Motor neuron (in vitro differentiated cells): ENCODE measurements at regions of chr10 and their contacts with region 1.

Region 1: DNA sequence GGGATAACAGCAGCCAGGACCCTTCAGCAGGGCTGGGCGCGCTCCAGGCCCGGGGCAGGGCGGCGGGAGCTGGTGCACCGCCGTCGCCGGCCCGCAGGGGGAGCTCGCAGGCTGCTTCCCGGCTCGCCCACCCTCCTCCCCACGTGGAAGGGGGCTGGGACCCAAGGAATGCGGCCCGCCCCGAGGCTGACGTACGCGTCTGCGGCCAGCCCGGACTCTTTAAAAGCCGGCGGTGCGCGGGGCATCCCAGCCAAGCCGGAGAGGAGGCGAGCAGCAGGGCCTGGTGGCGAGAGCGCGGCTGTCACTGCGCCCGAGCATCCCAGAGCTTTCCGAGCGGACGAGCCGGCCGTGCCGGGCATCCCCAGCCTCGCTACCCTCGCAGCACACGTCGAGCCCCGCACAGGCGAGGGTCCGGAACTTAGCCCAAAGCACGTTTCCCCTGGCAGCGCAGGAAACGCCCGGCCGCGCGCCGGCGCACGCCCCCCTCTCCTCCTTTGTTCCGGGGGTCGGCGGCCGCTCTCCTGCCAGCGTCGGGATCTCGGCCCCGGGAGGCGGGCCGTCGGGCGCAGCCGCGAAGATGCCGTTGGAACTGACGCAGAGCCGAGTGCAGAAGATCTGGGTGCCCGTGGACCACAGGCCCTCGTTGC is at the start of gene PFKFB3:
- ATAC-seq: peak; percentile 72 to 83 (median 79)
- H3K4me3 ChIP-seq: peak within 1 kb of the TSS; percentile 54 to 81 (median 59)
- H3K27ac ChIP-seq: peak within 1 kb of the TSS; percentile 77 to 89
- H3K4me1 ChIP-seq: peaks cover 12 to 25% of the 10 kb centered on the region in 2 donors
- total RNA-seq, gene PFKFB3: 32.4 to 80.6 (median 46.6) TPM

Region 2: GRCh38 chr10:6239213-6239991 is 36.6 kb after region 1 on chr10:
- in situ Hi-C with region 1: no loop called
- ATAC-seq: peak; percentile 64 to 100 (median 93)
- H3K4me3 ChIP-seq: no peak overlapping the region
- H3K27ac ChIP-seq: no peak overlapping the region
- H3K4me1 ChIP-seq: no peaks in the 10 kb centered on the region

Region 3: DNA sequence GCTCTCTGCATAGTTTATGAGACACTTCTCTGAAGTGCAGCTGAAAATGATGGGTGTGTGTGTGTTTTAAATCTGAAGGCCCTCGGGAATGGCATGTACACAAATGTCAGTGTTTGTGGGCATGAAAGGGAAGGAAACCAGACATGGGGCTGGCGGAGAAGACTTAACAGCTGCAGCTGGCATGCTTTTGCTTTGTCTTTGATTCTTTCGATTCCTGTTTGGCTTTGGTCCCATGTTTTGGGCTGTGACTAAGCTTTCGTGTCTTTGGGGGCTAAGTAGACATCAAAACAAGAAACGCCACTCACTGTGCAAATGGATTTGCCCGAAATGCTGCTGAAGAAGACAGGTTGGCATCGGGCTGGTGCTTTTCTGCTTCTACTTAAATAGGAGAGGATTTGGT is 179.3 kb after region 1 on chr10:
- in situ Hi-C with region 1: loop called in 1 of 9 experiments (anchors 25 kb)
- ATAC-seq: peak in 1 of 8 experiments; percentile 48
- H3K4me3 ChIP-seq: no peak overlapping the region
- H3K27ac ChIP-seq: no peak overlapping the region
- H3K4me1 ChIP-seq: no peaks in the 10 kb centered on the region